A673 (cell line): ENCODE measurements at regions of chr3 and their contacts with region 1.

Region 1: DNA sequence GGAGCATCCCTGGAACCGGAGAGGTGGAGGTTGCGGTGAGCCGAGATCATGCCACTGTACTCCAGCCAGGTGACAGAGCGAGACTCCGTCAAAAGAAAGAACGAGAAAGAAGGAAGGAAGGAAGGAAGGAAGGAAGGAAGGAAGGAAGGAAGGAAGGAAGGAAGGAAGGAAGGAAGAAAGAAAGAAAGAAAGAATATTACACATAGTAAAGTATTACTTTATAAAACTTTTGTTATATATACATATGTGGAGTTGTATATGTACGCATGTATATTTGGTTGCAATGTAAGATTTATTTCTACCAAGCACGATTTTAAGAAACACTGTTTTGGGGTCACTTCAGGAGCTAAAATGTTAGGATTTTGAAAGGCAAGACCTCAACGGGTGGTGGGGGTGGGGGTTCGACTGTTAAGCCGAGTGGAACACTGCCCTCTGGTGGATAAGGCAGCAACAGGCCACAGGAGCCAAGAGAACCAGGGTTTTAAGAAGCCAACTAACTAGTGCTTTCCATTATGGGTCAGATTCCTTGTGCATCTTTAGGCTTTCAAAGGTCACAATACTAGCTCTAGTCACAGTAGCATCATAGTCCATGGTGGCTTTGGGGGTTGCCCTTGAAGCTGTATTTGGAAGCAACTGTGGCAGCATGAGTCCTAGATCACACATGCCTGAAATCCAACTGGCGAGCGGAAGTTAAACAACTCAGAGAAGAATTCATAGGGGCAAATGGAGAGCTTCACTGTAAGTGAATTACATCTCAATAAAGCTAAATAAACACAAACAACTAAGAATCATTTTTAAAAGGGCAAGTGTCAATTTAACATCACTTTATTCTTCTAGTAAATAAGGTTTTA is 22.5 kb downstream of the GLB1 start:
- DNase-seq: peak; percentile 85
- H3K4me3 ChIP-seq: no peak overlapping the region
- H3K27ac ChIP-seq: peak overlapping the region; percentile 48
- H3K4me1 ChIP-seq: no peaks in the 10 kb centered on the region
- H3K27me3 ChIP-seq: no peaks in the 10 kb centered on the region
- CTCF ChIP-seq: peak; percentile 94

Region 2: DNA sequence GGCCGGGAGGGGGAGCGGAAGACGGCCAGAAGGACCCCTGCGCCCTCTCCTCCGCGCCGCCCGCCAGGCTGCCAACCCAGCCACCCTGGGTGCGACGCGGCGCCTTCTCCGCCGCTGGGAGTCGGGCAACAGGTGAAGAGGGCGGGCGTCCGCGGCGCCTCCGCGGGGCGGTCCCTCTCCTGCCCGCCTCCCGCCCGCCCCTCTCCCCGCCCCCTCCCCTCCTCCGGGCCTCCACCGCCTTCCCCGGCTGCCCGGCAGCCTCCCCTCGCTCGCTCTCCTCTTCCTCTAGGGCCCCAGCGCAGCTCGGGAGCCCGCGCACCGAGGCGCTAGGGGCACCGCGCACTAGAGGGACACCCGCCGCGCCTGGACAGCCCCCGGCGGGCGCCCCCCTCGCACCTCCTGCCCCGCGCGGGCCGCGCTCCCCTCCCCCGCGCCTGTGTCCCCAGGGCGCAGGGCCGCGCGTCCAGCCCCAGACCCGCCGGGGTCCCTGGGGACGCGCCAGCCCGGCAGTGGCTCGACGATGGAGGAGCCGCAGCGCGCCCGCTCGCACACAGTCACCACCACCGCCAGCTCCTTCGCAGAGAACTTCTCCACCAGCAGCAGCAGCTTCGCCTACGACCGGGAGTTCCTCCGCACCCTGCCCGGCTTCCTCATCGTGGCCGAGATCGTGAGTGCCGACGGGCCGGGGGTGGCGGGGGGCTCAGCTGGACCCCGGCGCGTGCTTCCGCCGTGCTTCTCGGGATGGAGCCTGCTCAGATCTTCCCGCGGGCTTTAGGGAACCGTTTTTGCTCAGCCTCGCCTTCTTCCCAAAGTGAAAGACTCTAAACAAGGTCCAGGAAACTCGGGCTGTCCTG is 835.8 kb before region 1 on chr3 and contains the start of gene CMTM8:
- CTCF ChIA-PET with region 1: interaction called, 13 read pairs
- POLR2A ChIA-PET with region 1: no interaction called
- intact Hi-C with region 1: no loop called
- DNase-seq: peak; percentile 54
- H3K4me3 ChIP-seq: peak within 1 kb of the TSS; percentile 66
- H3K27ac ChIP-seq: no peak within 1 kb of the TSS
- H3K4me1 ChIP-seq: no peaks in the 10 kb centered on the region
- H3K27me3 ChIP-seq: peaks cover 23% of the 10 kb centered on the region
- CTCF ChIP-seq: no peak
- total RNA-seq, gene CMTM8: 1.7 and 2.1 TPM in 2 replicates

Region 3: GRCh38 chr3:32909999-32910398 is 164.4 kb before region 1 on chr3:
- CTCF ChIA-PET with region 1: interaction called, 17 read pairs
- POLR2A ChIA-PET with region 1: no interaction called
- intact Hi-C with region 1: no loop called
- DNase-seq: no peak
- H3K4me3 ChIP-seq: no peak overlapping the region
- H3K27ac ChIP-seq: no peak overlapping the region
- H3K4me1 ChIP-seq: no peaks in the 10 kb centered on the region
- H3K27me3 ChIP-seq: no peaks in the 10 kb centered on the region
- CTCF ChIP-seq: no peak

Region 4: GRCh38 chr3:32960404-32961170 is 113.9 kb before region 1 on chr3:
- CTCF ChIA-PET with region 1: interaction called, 12 read pairs
- POLR2A ChIA-PET with region 1: no interaction called
- intact Hi-C with region 1: no loop called
- DNase-seq: no peak
- H3K4me3 ChIP-seq: no peak overlapping the region
- H3K27ac ChIP-seq: no peak overlapping the region
- H3K4me1 ChIP-seq: no peaks in the 10 kb centered on the region
- H3K27me3 ChIP-seq: no peaks in the 10 kb centered on the region
- CTCF ChIP-seq: no peak

Region 5: DNA sequence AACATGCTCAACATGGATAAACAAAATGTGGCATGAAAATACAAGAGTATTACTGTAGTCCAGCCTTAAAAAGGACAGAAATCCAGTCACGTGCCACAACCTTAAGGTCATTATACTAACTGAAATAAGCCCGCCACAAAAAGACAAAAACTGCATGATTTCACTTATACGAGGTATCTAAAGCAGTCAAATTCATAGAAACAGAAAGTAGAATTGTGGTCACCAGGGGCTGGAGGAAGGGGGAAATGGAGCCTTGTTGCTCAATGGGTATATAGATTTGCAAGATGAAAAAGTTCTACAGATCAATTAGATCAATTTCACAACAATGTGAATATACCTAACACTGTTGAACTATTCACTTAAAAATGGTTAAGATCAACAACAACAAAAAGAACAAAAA is 15.1 kb after region 1 on chr3:
- CTCF ChIA-PET with region 1: interaction called, 4 read pairs
- POLR2A ChIA-PET with region 1: interaction called, 16 read pairs
- intact Hi-C with region 1: no loop called
- DNase-seq: no peak
- H3K4me3 ChIP-seq: no peak overlapping the region
- H3K27ac ChIP-seq: no peak overlapping the region
- H3K4me1 ChIP-seq: peaks cover 3% of the 10 kb centered on the region
- H3K27me3 ChIP-seq: no peaks in the 10 kb centered on the region
- CTCF ChIP-seq: no peak

Region 6: GRCh38 chr3:33277193-33277882 is 202.9 kb after region 1 on chr3 and contains the start of gene FBXL2:
- CTCF ChIA-PET with region 1: interaction called, 14 read pairs
- POLR2A ChIA-PET with region 1: no interaction called
- intact Hi-C with region 1: no loop called
- DNase-seq: peak; percentile 91
- H3K4me3 ChIP-seq: peak within 1 kb of the TSS; percentile 79
- H3K27ac ChIP-seq: peak within 1 kb of the TSS; percentile 74
- H3K4me1 ChIP-seq: peaks cover 7% of the 10 kb centered on the region
- H3K27me3 ChIP-seq: no peaks in the 10 kb centered on the region
- CTCF ChIP-seq: no peak
- total RNA-seq, gene FBXL2: 7.8 and 12.0 TPM in 2 replicates

Region 7: GRCh38 chr3:33355611-33356010 is 281.2 kb after region 1 on chr3:
- CTCF ChIA-PET with region 1: no interaction called
- POLR2A ChIA-PET with region 1: no interaction called
- intact Hi-C with region 1: no loop called
- DNase-seq: peak; percentile 10
- H3K4me3 ChIP-seq: no peak overlapping the region
- H3K27ac ChIP-seq: no peak overlapping the region
- H3K4me1 ChIP-seq: no peaks in the 10 kb centered on the region
- H3K27me3 ChIP-seq: no peaks in the 10 kb centered on the region
- CTCF ChIP-seq: no peak

Region 8: DNA sequence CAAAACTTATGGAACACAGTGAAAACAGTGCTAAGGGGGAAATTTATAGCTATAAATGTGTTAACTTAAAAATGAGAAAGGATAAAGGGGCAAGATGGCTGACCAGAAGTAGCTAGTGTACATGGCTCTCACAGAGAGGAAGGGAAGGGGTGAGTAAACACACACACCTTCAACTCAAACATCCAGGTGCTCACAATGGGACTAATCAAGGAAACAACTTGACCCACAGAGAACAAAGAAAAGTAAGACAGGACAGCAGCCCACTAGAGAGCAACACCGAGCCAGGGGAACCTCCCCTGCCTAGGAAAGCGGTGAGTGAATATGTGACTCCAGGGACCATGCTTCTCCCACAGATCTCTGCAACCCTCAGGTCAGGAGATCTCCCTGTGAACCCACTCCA is 450.8 kb after region 1 on chr3:
- CTCF ChIA-PET with region 1: interaction called, 18 read pairs
- POLR2A ChIA-PET with region 1: no interaction called
- intact Hi-C with region 1: no loop called
- DNase-seq: no peak
- H3K4me3 ChIP-seq: no peak overlapping the region
- H3K27ac ChIP-seq: no peak overlapping the region
- H3K4me1 ChIP-seq: no peaks in the 10 kb centered on the region
- H3K27me3 ChIP-seq: no peaks in the 10 kb centered on the region
- CTCF ChIP-seq: no peak